Breast epithelium (tissue), 4 donors: ENCODE measurements at regions of chr13 and their contacts with region 1.

Region 1: GRCh38 chr13:91348906-91349435 is 1.5 kb downstream of the MIR17HG start:
- DNase-seq: peak; percentile 83 to 90
- H3K4me3 ChIP-seq: peak overlapping the region; percentile 78 to 96 (median 96)
- H3K27ac ChIP-seq: peak overlapping the region; percentile 95 to 98
- H3K4me1 ChIP-seq: peaks cover 0 to 6% of the 10 kb centered on the region in 2 donors
- H3K27me3 ChIP-seq: no peaks in the 10 kb centered on the region
- CTCF ChIP-seq: peak; percentile 79 to 95 (median 80)
- POLR2A ChIP-seq: no peak

Region 2: DNA sequence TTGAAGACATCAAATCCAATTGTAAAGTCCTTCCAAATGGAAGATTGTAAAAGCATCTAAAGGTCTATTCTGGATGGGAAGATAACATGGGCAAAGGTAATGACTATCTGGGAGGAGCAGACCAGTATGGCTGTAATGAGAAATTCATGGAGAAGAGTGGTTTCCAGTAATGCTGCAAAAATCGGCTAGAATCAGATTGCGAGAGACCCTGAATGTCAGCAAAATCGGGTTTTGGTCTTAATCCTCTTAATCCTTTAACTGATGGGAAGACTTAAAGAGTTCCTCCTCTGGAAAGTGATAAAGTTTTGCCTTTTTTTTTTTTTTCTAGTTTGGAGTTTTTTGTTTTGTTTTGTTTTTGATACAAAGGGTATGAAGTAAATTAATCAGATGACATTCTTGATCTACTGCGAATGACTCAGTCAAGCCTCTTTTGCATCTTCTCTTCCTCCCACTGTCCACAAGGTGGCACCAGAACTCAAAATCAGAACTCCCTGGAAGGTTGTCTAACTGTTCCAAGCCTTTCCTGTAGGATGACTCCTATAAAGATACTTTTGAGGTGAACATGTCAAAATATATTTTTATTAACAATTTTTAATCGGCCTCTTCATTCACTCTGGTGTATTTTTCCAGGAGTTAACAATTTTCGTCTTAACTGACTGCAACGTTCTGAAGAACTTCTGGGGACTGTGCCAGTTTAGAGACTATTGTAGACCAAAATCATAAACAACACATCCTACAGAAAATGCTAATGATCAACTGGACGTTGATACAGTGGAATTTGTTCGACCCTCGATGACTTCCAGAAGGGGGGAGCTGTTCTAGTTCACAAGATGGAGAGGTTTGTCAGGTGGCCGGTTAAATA is 214.8 kb before region 1 on chr13:
- intact Hi-C with region 1: loop called (anchors 5 kb)
- DNase-seq: peak; percentile 37 to 53
- H3K4me3 ChIP-seq: no peak overlapping the region
- H3K27ac ChIP-seq: no peak overlapping the region
- H3K4me1 ChIP-seq: no peaks in the 10 kb centered on the region
- H3K27me3 ChIP-seq: no peaks in the 10 kb centered on the region
- CTCF ChIP-seq: peak; percentile 37 to 76 (median 71)
- POLR2A ChIP-seq: no peak

Region 3: DNA sequence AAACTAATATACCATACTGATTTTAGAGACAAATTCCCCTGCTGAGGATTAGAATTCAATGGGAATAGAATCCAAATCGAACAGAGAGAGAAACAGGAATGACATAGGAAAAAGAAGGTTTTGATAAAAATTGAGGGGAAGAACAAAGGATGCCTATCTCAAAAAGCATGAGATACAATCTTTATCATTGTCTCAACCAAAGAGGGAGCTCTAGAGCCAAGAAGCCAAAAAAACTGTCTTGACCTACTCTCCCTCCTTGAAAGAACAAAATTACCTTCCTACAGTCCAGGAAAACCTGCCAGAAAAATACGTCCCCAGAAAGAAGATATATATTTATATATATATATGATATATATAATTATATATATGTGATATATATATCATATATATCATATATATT is 40.7 kb before region 1 on chr13:
- intact Hi-C with region 1: no loop called
- DNase-seq: no peak
- H3K4me3 ChIP-seq: no peak overlapping the region
- H3K27ac ChIP-seq: no peak overlapping the region
- H3K4me1 ChIP-seq: no peaks in the 10 kb centered on the region
- H3K27me3 ChIP-seq: no peaks in the 10 kb centered on the region
- CTCF ChIP-seq: no peak
- POLR2A ChIP-seq: no peak